ENCODE measurements at regions of chr1 and their contacts with region 1.

Region 1: GRCh38 chr1:9874959-9875635 is 35.0 kb downstream of the CTNNBIP1 start:
- DNase-seq: peak; percentile 84

Region 2: DNA sequence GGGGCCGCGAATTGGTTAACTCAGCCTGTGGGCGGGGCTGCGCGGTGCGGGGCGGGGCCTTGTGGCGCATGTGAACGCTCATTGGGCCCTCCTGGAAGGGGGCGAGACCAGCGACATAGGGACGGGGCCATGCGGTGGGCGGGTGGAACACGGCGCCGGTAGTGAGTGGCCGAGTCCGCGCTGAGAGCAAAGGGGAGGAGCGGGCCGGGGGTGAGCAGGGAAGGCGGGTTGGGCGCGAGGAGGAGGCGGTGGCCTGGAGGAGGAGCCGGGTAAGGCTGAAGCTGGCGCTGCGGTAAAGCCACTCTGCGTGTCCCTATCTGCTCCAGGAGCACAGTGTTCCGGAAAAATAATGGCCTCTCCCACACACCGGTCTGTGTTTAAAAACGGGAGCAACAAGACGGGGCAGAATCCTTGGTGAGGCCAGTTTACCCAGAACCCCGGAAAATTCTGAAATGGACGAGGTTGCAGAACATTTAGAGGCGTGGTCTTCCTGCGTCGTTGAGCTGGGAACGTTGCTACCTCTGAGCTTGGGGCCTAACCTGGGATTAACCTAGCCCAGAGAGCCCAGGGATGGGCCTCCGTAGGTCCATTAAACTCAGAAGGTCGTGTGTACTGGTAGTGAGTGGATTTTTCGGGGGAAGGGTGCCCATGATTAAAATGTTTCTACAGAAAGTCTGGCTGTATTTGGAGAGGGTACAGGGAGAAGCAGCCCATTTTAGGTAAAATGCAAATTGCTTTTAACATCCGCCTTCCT is 35.5 kb after region 1 on chr1:
- intact Hi-C with region 1: loop called (anchors 1 kb)
- DNase-seq: peak; percentile 100

Region 3: DNA sequence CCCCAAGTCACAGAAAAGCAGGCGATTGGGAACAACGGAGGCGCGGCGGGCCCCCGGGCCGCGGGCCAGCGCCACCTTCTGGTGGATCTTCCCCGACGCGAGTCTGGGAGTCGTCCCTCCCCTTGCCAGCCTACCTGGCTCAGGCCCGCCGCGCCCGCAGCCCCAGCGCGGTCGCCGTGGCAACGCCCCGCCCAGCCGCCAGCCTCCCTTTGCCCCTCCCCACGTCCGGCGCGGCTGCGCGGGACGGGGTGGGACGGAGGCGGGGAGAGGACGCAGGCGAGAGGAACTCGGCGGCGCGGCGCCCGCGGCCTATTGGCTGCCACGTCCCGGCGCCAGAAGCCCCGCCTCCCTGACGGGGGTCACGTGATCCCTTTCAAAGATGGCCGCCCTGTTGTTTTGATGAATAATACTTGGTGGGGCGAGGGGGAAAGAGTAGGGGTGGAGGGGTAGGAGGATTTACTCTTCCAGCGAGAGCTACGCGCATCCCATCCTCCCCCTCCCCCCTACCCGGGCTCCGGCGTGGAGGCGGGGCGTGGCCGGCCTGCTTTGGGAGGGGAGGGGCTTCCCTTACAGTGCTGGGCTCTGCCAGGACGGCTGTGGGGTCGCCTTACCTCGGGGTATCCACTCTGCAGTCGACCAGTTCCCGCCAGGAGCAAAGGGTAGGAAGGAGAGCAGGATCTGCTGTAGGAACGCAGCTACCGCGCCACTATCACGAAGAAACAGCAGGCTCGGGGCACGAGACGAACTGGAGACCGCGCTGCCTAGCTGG is 157.7 kb after region 1 on chr1 and contains the start of gene UBE4B:
- intact Hi-C with region 1: loop called (anchors 5 kb)
- DNase-seq: peak; percentile 99
- total RNA-seq, gene UBE4B: 62.1 TPM

Region 4: DNA sequence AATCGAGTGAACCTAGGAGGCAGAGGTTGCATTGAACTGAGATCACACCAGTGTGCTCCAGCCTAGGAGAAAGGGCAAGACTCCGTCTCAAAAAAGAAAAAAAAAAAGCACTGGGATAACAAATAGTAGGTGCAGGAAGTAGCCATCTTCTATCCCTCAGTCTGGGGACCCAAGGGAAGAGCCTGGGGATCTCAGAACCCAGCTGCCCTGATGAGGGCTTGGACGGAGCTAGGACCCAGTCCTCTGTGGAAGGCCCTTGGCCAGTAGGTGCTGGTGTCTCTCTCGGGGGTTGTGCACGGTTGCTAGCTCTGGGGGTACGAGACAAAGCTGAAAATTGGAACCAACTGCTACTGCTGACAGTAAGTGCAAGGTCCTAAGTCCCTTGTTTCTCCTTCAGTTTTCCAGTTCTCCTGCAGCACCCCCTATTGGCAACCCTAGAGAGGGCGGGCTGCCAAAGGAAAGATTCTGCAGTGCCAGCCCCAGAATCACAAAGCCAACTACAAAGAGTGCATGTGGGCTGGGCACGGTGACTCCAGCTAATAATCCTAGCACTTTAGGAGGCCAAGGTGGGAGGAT is 277.7 kb after region 1 on chr1:
- intact Hi-C with region 1: loop called (anchors 5 kb)
- DNase-seq: no peak